Transverse colon (tissue), 4 donors: ENCODE measurements at regions of chr1 and their contacts with region 1.

Region 1: DNA sequence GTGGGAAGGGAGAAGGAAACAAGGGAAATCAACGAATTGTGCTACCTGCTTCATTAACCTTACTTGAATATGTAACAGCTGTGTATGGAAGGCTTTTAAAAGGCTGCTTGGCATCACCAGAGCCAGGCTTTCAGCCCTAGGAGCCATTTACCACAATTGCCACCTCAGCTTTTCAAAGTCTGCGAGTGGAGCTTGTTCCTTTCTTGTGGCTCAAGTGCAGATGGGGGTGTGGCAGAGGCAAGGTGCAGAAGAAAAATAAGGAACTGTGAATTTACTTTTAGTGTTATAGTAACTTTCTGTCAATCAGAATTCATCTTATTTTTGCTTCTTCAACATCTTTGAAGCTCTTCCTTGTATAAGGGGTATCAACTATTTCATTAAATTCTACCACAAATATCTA is 17.6 kb downstream of the CLCA2 start:
- DNase-seq: peak; percentile 28
- H3K4me3 ChIP-seq: no peak overlapping the region
- H3K27ac ChIP-seq: peak overlapping the region in 2 of 4 donors; percentile 4 to 56
- H3K4me1 ChIP-seq: peaks cover 0 to 9% (median 0%) of the 10 kb centered on the region in 4 donors
- H3K27me3 ChIP-seq: no peaks in the 10 kb centered on the region
- CTCF ChIP-seq: no peak
- EP300 ChIP-seq: no peak
- POLR2A ChIP-seq: no peak

Region 2: DNA sequence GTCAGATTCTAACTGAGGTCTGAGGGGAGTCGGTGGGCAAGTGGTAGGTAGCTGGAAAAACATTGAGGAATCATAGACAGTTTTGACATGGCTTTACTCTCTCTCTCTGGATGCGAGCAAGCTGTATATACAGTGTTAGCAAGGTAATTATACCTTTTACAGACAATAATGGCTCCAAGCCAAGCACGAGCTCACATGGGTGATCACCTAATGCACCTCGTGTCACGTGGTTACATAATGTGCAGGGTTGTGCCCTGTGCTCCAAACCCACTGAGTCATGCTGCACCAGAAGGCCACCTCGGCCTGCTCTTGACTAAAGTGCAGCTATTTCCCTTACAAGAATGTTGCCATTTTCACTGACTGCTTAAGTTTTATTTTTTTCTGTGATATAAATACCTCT is 25.2 kb before region 1 on chr1:
- in situ Hi-C with region 1: no loop called
- intact Hi-C with region 1: loop called (anchors 1 kb)
- DNase-seq: peak; percentile 77
- H3K4me3 ChIP-seq: no peak overlapping the region
- H3K27ac ChIP-seq: no peak overlapping the region
- H3K4me1 ChIP-seq: peaks cover 0 to 5% (median 1%) of the 10 kb centered on the region in 4 donors
- H3K27me3 ChIP-seq: no peaks in the 10 kb centered on the region
- CTCF ChIP-seq: no peak
- EP300 ChIP-seq: no peak
- POLR2A ChIP-seq: no peak